Activated CD4-positive, alpha-beta T cell treated with anti-CD3 and anti-CD28 coated beads for 36 hours (primary cell): ENCODE measurements at regions of chr17 and their contacts with region 1.

Region 1: DNA sequence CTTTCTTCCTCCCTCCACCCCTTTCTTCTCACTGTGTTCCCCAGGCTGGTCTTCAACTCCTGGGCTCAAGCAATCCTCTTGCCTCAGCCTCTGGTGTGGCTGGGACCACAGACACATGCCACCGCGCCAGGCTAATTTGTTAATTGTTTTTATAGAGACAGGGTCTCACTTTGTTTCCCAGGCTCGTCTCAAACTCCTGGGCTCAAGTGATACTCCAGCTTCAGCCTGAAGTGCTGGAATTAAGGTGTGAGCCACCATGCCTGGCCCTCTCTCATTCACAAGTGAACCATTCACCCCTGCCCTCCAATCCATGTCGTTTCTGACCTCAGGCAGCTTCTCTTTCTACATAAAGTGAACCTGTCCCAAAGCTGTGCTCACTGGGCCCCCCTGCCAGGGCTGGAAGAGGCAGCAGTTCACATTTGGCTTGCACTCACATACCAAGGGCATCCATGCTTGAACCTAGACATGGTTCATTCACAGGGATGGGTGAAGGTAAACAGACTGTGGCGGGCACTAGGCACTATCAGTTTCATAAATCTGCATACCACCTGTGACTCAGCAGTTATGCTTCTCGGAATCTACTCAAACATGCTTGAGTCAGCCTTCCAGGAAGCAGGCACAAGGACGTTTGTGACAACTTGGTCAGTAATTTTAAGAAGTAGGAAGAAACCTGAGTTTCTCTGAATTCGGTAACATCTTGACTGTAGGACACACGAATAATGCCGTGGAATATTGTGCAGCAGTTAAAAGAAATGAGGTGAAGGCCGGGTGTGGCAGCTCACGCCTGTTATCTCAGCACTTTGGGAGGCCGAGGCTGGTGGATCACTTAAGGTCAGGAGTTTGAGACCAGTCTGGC is 6.0 kb upstream of the RNF213 start:
- DNase-seq: peak; percentile 83
- ATAC-seq: peak; percentile 62
- H3K4me3 Mint-ChIP-seq: peak overlapping the region; percentile 64
- H3K27ac Mint-ChIP-seq: peak overlapping the region; percentile 97
- H3K4me1 Mint-ChIP-seq: peaks cover 71% of the 10 kb centered on the region
- H3K27me3 Mint-ChIP-seq: no peaks in the 10 kb centered on the region

Region 2: GRCh38 chr17:80053102-80053501 is 201.5 kb before region 1 on chr17:
- CTCF ChIA-PET with region 1: no interaction called
- POLR2A ChIA-PET with region 1: no interaction called
- intact Hi-C with region 1: no loop called
- DNase-seq: no peak
- ATAC-seq: no peak
- H3K4me3 Mint-ChIP-seq: no peak overlapping the region
- H3K27ac Mint-ChIP-seq: no peak overlapping the region
- H3K4me1 Mint-ChIP-seq: no peaks in the 10 kb centered on the region
- H3K27me3 Mint-ChIP-seq: no peaks in the 10 kb centered on the region

Region 3: DNA sequence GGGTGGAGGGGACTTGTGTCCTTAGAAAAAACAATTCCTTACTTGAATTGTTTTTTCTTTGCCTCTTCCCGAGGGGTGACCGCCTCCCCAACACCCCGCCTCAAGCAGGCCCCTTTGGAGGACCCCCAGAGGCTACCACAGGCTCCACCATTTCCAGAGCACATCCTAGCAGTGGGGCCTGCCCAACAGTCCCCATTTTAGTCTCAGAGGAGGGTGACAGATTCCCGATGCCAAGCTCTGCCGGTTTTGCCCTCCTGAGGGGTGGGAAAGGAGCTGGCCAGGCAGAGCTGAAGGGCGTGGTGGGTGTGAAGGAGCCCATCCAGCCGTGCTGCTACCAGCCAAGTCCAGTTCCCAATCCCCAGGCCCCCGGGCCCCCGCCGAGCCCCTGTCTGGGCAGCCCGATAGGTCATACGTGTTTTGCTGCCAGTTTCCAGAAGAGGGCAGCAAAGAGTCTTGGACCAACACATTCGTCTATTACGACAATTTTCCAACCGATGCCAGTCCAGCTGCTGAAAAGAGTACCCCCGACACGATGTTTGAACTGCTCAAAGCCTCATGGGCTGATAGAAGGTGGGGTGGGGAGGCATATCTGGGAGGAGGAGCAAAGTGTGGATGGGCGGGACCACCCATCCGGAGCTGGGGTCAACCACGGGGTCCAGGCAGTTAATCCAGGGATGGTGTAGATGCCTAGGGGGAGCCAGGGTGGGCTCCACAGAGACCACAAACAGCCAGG is 172.1 kb before region 1 on chr17:
- CTCF ChIA-PET with region 1: no interaction called
- POLR2A ChIA-PET with region 1: no interaction called
- intact Hi-C with region 1: loop called in 1 of 2 experiments (anchors 2 kb)
- DNase-seq: peak; percentile 80
- ATAC-seq: peak; percentile 91
- H3K4me3 Mint-ChIP-seq: no peak overlapping the region
- H3K27ac Mint-ChIP-seq: no peak overlapping the region
- H3K4me1 Mint-ChIP-seq: peaks cover 3% of the 10 kb centered on the region
- H3K27me3 Mint-ChIP-seq: no peaks in the 10 kb centered on the region

Region 4: DNA sequence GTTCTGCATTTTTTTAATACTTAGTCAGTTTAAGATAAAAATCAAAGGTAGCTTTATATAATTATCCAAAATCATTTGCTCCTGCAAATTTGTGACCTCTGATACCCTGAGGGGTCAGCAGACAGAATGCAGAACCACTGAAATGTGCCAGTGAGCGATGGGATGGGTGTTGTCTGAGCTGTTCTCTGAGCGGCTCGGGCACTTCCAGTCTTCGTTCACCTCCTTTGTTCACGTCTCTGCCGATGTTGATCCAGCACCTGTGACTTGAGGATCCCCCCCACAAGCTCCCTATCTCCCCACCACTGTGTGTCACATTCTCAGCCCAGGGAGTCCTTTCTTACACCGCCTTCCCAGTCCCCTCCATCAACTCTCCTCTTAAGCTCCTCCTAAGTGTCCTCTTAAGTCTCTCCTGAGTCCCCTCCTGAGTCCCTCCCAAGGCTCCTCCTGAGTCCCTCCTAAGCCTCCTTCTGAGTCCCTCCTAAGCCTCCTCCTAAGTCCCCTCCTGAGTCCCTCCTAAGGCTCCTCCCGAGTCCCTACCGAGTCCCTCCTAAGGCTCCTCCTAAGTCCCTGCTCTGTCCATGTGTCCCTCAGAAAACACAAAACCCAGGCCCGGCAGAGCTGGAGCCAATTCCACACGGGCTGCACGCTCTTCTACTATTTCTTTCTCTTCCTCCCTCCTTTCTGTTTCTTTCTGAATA is 53.5 kb after region 1 on chr17:
- CTCF ChIA-PET with region 1: no interaction called
- POLR2A ChIA-PET with region 1: no interaction called
- intact Hi-C with region 1: no loop called
- DNase-seq: no peak
- ATAC-seq: no peak
- H3K4me3 Mint-ChIP-seq: no peak overlapping the region
- H3K27ac Mint-ChIP-seq: peak overlapping the region; percentile 84
- H3K4me1 Mint-ChIP-seq: peaks cover 12% of the 10 kb centered on the region
- H3K27me3 Mint-ChIP-seq: no peaks in the 10 kb centered on the region

Region 5: DNA sequence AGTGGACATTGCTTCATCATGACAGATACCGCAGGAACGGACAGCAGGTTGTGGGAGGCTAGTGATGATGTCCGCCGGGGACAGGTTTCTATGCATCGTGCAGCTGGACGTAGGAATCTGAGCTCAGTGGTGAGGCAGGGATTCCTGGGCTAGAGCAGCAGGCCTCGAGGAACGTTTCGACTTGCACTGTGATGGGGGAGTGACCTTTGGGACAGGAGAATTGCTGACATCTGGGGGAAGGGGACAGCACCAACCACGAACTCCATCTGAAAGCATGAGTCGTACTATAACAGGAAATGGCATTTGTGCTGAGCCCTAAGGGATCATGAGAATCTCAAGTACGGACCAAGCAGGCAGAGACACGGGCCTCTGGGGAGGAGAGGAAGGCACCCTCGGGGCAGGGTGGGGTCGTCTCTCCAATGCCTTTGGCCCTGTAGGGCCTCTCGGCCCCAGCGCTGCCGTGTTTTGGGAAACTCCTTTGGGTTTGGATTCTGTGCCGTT is 94.6 kb after region 1 on chr17:
- CTCF ChIA-PET with region 1: no interaction called
- POLR2A ChIA-PET with region 1: no interaction called
- intact Hi-C with region 1: no loop called
- DNase-seq: no peak
- ATAC-seq: peak; percentile 41
- H3K4me3 Mint-ChIP-seq: no peak overlapping the region
- H3K27ac Mint-ChIP-seq: peak overlapping the region; percentile 34
- H3K4me1 Mint-ChIP-seq: peaks cover 7% of the 10 kb centered on the region
- H3K27me3 Mint-ChIP-seq: no peaks in the 10 kb centered on the region